Activated CD8-positive, alpha-beta memory T cell treated with anti-CD3 and anti-CD28 coated beads, Interleukin-2, amount 10 ng/mL, durations not matched to agents 7 days and 5 days (primary cell): ENCODE measurements at regions of chr17 and their contacts with region 1.

Region 1: GRCh38 chr17:64343853-64344637 is 46.6 kb downstream of the PECAM1 start:
- DNase-seq: no peak
- ATAC-seq: no peak
- H3K4me3 Mint-ChIP-seq: no peak overlapping the region
- H3K27ac Mint-ChIP-seq: no peak overlapping the region
- H3K4me1 Mint-ChIP-seq: peaks cover 8% of the 10 kb centered on the region
- H3K27me3 Mint-ChIP-seq: no peaks in the 10 kb centered on the region

Region 2: DNA sequence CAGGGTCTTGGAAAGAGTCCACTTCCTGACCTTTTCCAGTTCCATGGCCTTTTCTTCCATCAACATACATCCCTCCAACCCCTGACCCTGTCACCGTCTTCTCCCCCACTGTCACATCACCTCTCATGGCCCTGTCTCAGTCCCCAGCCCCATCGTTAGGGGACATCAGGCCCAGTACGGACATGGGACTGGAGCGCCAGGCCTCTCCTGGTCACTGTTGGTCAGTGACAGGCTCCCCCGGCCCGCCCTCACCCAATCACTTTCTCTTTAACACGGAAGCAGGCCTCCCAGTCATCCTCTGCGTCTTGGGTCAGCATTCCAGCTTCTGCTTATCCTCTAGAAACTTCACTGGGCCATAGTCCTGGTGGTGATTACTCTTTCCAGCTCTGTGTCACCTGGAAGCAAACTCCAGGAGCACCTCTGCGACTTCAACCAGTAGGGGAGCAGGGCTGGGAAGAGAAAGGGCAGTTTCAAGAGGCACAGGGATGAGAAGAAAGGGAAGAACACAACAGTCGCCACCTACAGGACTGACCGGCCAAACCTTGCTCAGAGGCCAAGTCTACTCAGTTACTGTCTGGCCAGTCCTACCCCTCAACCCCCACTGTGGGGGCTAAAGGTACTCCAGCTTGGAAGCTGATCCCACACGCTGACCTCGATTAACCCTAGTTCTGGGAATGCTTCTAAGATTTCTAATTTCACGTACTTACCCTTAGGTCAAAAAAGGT is 307.7 kb before region 1 on chr17:
- CTCF ChIA-PET with region 1: no interaction called
- DNase-seq: no peak
- ATAC-seq: no peak
- H3K4me3 Mint-ChIP-seq: no peak overlapping the region
- H3K27ac Mint-ChIP-seq: no peak overlapping the region
- H3K4me1 Mint-ChIP-seq: no peaks in the 10 kb centered on the region
- H3K27me3 Mint-ChIP-seq: no peaks in the 10 kb centered on the region

Region 3: DNA sequence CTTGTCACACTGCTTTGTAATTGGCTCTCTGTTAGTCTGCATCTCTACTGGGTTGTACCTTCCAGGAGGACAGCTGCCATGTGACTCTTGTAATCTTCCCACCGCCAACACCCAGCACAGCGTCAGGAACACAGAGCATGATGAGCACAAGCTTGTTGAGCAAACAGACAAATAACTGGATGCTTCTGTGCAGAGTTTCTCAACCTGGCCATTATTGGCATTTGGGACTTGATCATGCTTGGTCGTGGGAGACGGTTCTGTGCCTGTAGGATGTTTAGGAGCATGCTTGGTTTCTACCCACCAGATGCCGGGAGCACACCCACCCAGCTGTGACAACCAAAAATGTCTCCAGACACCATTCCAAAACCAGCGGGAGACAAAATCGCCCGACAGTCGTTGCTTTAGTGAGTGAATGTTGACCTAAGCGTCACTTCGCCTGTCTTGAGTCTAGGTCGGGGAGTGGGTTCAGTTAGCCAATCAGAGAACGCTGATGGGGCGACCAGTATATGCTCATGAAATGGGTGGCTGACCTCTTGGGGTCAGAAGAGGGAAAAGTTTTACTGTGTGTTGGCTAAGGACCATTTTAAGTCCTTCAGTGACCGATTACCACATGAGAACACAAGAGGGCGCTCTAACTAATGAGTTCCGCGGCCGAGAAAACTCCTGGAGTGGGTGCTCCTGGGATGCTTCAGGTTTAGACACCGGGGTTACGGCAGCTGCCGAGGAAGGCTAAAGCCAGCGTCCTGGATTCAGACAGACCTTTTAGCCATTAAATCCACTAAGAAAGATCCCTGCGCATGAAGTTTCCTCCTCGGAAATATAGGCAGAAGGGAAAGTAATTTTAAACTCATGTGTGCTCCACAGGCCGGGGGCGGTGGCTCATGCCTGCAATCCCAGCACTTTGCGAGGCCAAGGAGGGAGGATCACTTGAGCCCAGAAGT is 23.2 kb before region 1 on chr17:
- CTCF ChIA-PET with region 1: interaction called, 10 read pairs
- DNase-seq: peak; percentile 69
- ATAC-seq: peak; percentile 72
- H3K4me3 Mint-ChIP-seq: no peak overlapping the region
- H3K27ac Mint-ChIP-seq: no peak overlapping the region
- H3K4me1 Mint-ChIP-seq: peaks cover 3% of the 10 kb centered on the region
- H3K27me3 Mint-ChIP-seq: peaks cover 29% of the 10 kb centered on the region

Region 4: GRCh38 chr17:64506576-64507477 is 162.8 kb after region 1 on chr17 and contains the start of gene CEP95:
- CTCF ChIA-PET with region 1: no interaction called
- DNase-seq: peak; percentile 98
- ATAC-seq: peak; percentile 72
- H3K4me3 Mint-ChIP-seq: peak within 1 kb of the TSS; percentile 100
- H3K27ac Mint-ChIP-seq: peak within 1 kb of the TSS; percentile 100
- H3K4me1 Mint-ChIP-seq: peaks cover 51% of the 10 kb centered on the region
- H3K27me3 Mint-ChIP-seq: peaks cover 2% of the 10 kb centered on the region
- total RNA-seq, gene CEP95: 45.7 to 52.6 TPM